ENCODE measurements at regions of chr3 and their contacts with region 1.

Region 1: GRCh38 chr3:56801662-56802377 is at the start of gene ARHGEF3:
- DNase-seq: peak; percentile 90
- H3K4me3 ChIP-seq: peak within 1 kb of the TSS; percentile 56 to 82 (median 68)
- H3K27ac ChIP-seq: peak within 1 kb of the TSS; percentile 7
- H3K4me1 ChIP-seq: peaks cover 27% of the 10 kb centered on the region
- H3K27me3 ChIP-seq: no peaks in the 10 kb centered on the region
- CTCF ChIP-seq: peak; percentile 32 to 54
- POLR2A ChIP-seq: peak; percentile 90
- total RNA-seq, gene ARHGEF3: 11.5 and 16.3 TPM in 2 replicates

Region 2: GRCh38 chr3:56711344-56711743 is 90.5 kb before region 1 on chr3:
- CTCF ChIA-PET with region 1: interaction called, 249 read pairs
- POLR2A ChIA-PET with region 1: interaction called, 3 read pairs
- dilution Hi-C with region 1: no loop called
- intact Hi-C with region 1: no loop called
- DNase-seq: no peak
- H3K4me3 ChIP-seq: no peak overlapping the region
- H3K27ac ChIP-seq: no peak overlapping the region
- H3K4me1 ChIP-seq: no peaks in the 10 kb centered on the region
- H3K27me3 ChIP-seq: no peaks in the 10 kb centered on the region
- CTCF ChIP-seq: no peak
- POLR2A ChIP-seq: no peak

Region 3: DNA sequence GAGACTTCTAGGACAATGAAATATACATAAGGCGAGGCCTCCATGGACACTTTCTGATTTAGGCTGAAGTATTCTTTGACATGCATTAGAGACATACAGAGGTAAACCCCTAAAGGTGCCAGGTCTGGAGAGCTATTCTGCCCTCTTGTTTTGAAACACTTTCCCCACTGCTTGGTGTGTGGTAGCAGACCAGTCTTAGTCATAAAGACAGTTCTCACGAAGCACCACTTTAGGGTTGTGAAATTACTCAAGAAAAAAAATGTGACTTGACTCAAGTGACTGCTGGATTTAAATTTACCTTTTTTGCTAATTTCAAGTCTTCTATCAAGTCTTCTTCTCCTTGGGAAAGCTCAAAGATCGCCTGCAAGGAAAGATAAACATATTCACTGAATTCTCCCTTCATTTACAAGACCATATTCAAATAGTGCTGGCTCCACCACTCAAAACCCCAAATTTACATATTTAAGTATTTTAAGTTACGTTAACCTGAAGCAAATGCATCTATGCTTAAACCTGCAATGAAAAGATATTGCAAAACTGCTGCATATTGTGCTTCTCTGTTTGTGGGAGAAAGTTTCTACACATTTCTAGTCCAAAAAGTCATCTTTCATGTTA is 48.5 kb before region 1 on chr3:
- CTCF ChIA-PET with region 1: interaction called, 30 read pairs
- POLR2A ChIA-PET with region 1: no interaction called
- dilution Hi-C with region 1: no loop called
- intact Hi-C with region 1: loop called (anchors 5 kb)
- DNase-seq: no peak
- H3K4me3 ChIP-seq: no peak overlapping the region
- H3K27ac ChIP-seq: no peak overlapping the region
- H3K4me1 ChIP-seq: peaks cover 23% of the 10 kb centered on the region
- H3K27me3 ChIP-seq: no peaks in the 10 kb centered on the region
- CTCF ChIP-seq: no peak
- POLR2A ChIP-seq: no peak

Region 4: DNA sequence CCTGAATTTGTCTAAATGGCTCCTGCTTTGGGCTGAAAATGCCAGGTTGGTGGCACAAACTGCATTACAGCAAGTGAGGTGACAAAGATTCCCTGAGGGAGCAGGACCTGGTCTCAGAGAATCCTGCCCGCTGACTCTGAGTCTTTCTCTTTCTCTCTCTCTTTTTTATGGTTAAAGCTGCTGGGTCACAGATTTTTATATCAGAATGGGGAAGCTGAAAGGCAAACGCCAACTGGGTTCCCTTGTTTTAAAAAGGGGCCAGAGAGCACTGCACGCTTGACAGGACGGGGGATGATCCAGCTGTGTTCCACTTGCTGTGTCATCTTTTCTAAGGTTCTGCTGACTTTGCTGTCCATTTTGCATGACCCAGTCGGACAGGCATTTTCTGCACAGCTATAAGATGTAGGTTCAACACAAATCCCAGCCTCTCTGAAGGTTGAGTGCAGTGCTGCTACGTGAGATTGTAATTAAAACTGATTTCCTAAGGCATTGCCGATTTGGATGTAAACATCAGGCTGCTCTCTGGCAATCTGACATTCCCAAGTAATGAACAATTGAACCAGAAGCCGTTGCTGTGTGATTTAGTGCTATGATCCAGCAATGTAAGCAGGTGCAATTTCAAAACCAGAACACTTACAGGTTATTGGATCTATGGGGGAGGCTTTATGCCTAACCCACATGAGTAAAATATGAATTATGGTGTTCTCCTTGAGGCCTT is 25.8 kb before region 1 on chr3:
- CTCF ChIA-PET with region 1: interaction called, 15 read pairs
- POLR2A ChIA-PET with region 1: no interaction called
- dilution Hi-C with region 1: no loop called
- intact Hi-C with region 1: no loop called
- DNase-seq: no peak
- H3K4me3 ChIP-seq: no peak overlapping the region
- H3K27ac ChIP-seq: no peak overlapping the region
- H3K4me1 ChIP-seq: no peaks in the 10 kb centered on the region
- H3K27me3 ChIP-seq: no peaks in the 10 kb centered on the region
- CTCF ChIP-seq: no peak
- POLR2A ChIP-seq: no peak

Region 5: GRCh38 chr3:56823421-56824343 is 21.9 kb after region 1 on chr3:
- CTCF ChIA-PET with region 1: interaction called, 26 read pairs
- POLR2A ChIA-PET with region 1: interaction called, 3 read pairs
- dilution Hi-C with region 1: no loop called
- intact Hi-C with region 1: no loop called
- DNase-seq: no peak
- H3K4me3 ChIP-seq: no peak overlapping the region
- H3K27ac ChIP-seq: no peak overlapping the region
- H3K4me1 ChIP-seq: no peaks in the 10 kb centered on the region
- H3K27me3 ChIP-seq: peaks cover 0 to 4% of the 10 kb centered on the region in 2 experiments
- CTCF ChIP-seq: no peak
- POLR2A ChIP-seq: no peak

Region 6: DNA sequence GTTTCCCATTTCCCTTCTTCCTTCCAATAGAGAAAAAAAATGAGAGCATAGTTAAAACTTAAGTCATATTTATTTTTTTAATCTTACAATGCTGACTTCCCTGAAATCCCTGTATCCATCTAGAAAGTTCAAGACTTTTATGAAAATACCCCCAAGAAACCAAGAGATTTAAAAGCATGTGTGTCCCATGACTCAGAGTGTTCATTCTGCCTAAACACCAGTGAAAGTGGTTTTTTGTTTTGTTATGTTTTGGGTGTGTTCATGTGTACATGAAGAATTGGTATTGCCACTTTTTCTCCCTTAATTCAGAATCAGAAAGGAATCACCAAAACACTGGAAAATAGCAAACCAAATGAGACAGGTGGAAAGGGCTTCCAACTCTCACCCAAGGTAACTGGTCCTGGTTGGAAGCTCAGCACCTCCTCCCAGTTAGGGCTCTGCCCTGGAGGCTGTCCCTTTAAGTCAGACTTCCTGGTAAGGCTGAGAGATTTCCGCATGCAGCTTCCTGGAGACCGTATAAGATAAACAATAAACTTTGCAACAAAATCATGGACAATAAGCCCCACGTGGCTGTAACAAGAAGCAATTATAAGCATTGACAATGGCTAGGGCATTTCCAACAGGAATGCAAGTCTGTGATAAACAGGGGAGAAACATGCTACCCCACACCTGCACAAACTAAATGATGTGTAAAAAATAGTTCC is 121.9 kb after region 1 on chr3:
- CTCF ChIA-PET with region 1: interaction called, 15 read pairs
- POLR2A ChIA-PET with region 1: no interaction called
- dilution Hi-C with region 1: no loop called
- intact Hi-C with region 1: loop called (anchors 1 kb)
- DNase-seq: peak; percentile 97
- H3K4me3 ChIP-seq: no peak overlapping the region
- H3K27ac ChIP-seq: peak overlapping the region; percentile 92
- H3K4me1 ChIP-seq: peaks cover 71% of the 10 kb centered on the region
- H3K27me3 ChIP-seq: no peaks in the 10 kb centered on the region
- CTCF ChIP-seq: no peak
- POLR2A ChIP-seq: no peak